ENCODE measurements at regions of chr2 and their contacts with region 1.

Region 1: GRCh38 chr2:189412330-189412953 is 28.8 kb upstream of the WDR75 start:
- DNase-seq: no peak
- H3K4me3 ChIP-seq: no peak overlapping the region
- H3K27ac ChIP-seq: peak overlapping the region; percentile 74 to 76
- H3K4me1 ChIP-seq: peaks cover 0 to 19% of the 10 kb centered on the region in 2 donors
- H3K27me3 ChIP-seq: no peaks in the 10 kb centered on the region
- CTCF ChIP-seq: peak; percentile 67 to 75 (median 72)

Region 2: DNA sequence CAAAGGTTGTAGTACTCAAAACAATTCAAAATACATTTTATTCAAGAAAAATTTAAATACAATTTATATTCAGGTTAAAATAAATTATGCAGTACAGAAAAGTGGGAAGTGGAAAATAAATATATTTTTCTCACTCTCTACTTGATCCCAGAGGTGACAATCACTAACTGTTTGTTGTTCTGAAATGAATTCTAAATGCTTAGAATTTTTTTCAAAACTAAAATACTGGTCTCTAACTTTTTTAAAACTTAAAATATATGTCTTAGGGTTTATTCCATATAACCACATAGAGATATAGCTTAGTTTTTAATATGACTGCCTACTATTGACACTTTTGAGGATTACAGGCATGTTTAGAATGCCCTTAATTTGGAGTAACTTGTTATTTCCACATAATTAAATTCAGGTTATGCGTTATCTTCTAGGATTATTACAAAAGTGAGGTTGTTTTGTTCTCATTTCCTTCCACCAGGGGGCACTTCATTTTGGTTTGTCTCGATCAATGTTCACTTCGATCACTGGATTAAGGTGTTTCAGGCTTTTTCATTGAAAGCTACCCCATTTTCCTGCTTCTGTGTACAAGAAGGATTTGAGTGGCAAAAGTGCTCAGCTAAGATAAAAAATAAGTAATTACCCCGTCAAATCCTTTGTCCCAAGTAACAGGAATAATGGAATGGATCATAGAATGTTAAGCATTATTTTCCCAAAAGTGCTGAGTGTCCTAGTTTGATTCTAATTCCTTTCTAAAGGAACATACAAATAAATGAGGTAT is 1831.1 kb before region 1 on chr2:
- intact Hi-C with region 1: loop called (anchors 5 kb)
- DNase-seq: no peak
- H3K4me3 ChIP-seq: peak overlapping the region; percentile 39 to 52
- H3K27ac ChIP-seq: no peak overlapping the region
- H3K4me1 ChIP-seq: no peaks in the 10 kb centered on the region
- H3K27me3 ChIP-seq: no peaks in the 10 kb centered on the region
- CTCF ChIP-seq: peak; percentile 59 to 66 (median 65)

Region 3: GRCh38 chr2:188788621-188789020 is 623.8 kb before region 1 on chr2:
- intact Hi-C with region 1: loop called (anchors 10 kb)
- DNase-seq: peak; percentile 15 to 88
- H3K4me3 ChIP-seq: no peak overlapping the region
- H3K27ac ChIP-seq: peak overlapping the region; percentile 68 to 80
- H3K4me1 ChIP-seq: peaks cover 0 to 28% of the 10 kb centered on the region in 2 donors
- H3K27me3 ChIP-seq: no peaks in the 10 kb centered on the region
- CTCF ChIP-seq: no peak

Region 4: GRCh38 chr2:189014449-189015138 is 397.8 kb before region 1 on chr2:
- intact Hi-C with region 1: loop called (anchors 10 kb)
- DNase-seq: no peak
- H3K4me3 ChIP-seq: no peak overlapping the region
- H3K27ac ChIP-seq: peak overlapping the region; percentile 77 to 78
- H3K4me1 ChIP-seq: peaks cover 6 to 21% of the 10 kb centered on the region in 2 donors
- H3K27me3 ChIP-seq: no peaks in the 10 kb centered on the region
- CTCF ChIP-seq: no peak

Region 5: DNA sequence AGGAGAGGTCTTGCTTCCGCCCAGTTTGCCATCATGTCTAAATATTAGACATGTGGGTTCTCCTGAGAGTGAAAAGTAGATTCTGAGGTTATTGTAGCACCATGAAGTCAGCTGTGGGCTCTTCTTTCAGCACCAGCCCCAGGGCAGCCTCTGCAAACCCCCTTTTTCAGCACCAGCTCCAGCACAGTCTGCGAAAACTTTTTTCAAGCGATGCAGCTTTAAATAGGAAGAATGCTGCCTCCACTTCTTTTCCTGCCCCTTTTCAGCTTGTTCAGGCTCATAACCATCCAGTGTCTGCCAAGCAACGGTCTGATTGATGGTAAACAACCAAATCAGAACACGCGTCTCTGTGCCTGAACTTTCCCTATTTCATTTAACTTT is 232.9 kb before region 1 on chr2 and contains the start of gene COL5A2:
- intact Hi-C with region 1: loop called (anchors 5 kb)
- DNase-seq: peak in 1 of 2 donors; percentile 79
- H3K4me3 ChIP-seq: peak within 1 kb of the TSS; percentile 54 to 87
- H3K27ac ChIP-seq: peak within 1 kb of the TSS; percentile 74 to 84
- H3K4me1 ChIP-seq: peaks cover 0 to 3% of the 10 kb centered on the region in 2 donors
- H3K27me3 ChIP-seq: no peaks in the 10 kb centered on the region
- CTCF ChIP-seq: no peak
- total RNA-seq, gene COL5A2: 64.2 TPM

Region 6: DNA sequence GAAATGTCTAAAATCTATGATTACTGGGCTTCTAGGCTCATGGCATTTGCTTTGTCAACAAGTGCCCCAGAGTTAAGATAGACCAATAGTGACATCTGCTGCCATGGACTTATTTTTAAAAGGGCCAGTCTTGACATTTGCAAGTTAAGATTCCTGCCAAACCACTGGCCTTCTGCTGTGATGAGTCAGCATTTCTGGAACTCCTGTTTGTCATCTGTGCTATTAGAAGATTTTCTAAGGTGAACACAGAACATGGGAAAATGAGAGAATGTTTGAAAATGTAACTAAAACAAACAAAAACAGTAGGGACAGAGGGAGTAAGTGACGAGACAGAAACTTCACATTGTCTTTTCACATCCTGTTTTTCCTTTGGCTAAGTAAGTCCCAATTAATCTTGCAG is 64.9 kb before region 1 on chr2:
- intact Hi-C with region 1: loop called (anchors 1 kb)
- DNase-seq: peak in 1 of 2 donors; percentile 74
- H3K4me3 ChIP-seq: no peak overlapping the region
- H3K27ac ChIP-seq: peak overlapping the region; percentile 75 to 76
- H3K4me1 ChIP-seq: peaks cover 3 to 28% of the 10 kb centered on the region in 2 donors
- H3K27me3 ChIP-seq: no peaks in the 10 kb centered on the region
- CTCF ChIP-seq: peak in 2 of 3 experiments; percentile 35 to 47

Region 7: DNA sequence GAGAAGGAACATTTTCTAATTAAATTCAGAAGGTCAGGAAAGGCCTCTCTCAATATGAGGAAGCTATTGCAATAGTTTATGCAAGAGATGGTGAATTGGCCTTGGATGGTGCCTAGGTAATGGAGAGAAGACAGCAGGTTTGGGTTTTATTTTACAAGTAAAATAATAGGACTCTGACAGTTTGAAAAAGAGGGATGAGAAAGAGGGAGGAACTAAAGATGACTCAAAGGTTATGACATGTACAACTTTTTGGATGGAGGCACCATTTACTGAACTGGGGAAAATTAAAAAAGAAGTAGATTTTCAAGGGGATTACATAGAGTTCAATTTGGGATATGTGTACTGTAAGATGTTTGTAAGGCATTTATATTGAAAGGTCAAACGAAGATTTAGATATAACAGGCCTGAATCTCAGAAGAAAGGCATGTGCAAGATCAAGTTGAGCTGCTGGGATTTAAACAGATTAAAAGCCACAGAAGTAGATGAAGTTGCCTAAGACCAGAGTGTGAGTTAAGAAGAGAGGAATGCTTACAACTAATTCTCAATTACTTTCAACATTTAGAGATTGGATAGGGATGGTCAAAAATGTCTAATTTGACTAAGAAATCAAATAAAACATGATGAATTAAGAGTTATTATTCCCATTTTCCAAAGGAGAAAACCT is 236.5 kb after region 1 on chr2:
- intact Hi-C with region 1: no loop called
- DNase-seq: no peak
- H3K4me3 ChIP-seq: no peak overlapping the region
- H3K27ac ChIP-seq: no peak overlapping the region
- H3K4me1 ChIP-seq: no peaks in the 10 kb centered on the region
- H3K27me3 ChIP-seq: no peaks in the 10 kb centered on the region
- CTCF ChIP-seq: no peak

Measured in ascending aorta (tissue), 2 donors.